Caco-2 (cell line): ENCODE measurements at regions of chr2 and their contacts with region 1.

Region 1: GRCh38 chr2:120398996-120399888 is 53.3 kb downstream of the INHBB start:
- DNase-seq: peak; percentile 96 to 98
- H3K4me3 ChIP-seq: no peak overlapping the region
- H3K4me3 Mint-ChIP-seq: peak overlapping the region; percentile 4
- H3K27ac Mint-ChIP-seq: peak overlapping the region; percentile 96
- H3K4me1 ChIP-seq: peaks cover 88% of the 10 kb centered on the region
- H3K4me1 Mint-ChIP-seq: peaks cover 58% of the 10 kb centered on the region
- H3K27me3 ChIP-seq: no peaks in the 10 kb centered on the region
- H3K27me3 Mint-ChIP-seq: no peaks in the 10 kb centered on the region
- CTCF ChIP-seq: peak in 1 of 2 experiments; percentile 31

Region 2: GRCh38 chr2:120384486-120385354 is 14.5 kb before region 1 on chr2:
- CTCF ChIA-PET with region 1: no interaction called
- POLR2A ChIA-PET with region 1: no interaction called
- intact Hi-C with region 1: loop called (anchors 1 kb)
- DNase-seq: peak; percentile 51 to 71
- H3K4me3 ChIP-seq: no peak overlapping the region
- H3K4me3 Mint-ChIP-seq: no peak overlapping the region
- H3K27ac Mint-ChIP-seq: no peak overlapping the region
- H3K4me1 ChIP-seq: peaks cover 22% of the 10 kb centered on the region
- H3K4me1 Mint-ChIP-seq: no peaks in the 10 kb centered on the region
- H3K27me3 ChIP-seq: no peaks in the 10 kb centered on the region
- H3K27me3 Mint-ChIP-seq: no peaks in the 10 kb centered on the region
- CTCF ChIP-seq: no peak

Region 3: GRCh38 chr2:120429586-120430500 is 30.6 kb after region 1 on chr2:
- CTCF ChIA-PET with region 1: no interaction called
- POLR2A ChIA-PET with region 1: no interaction called
- intact Hi-C with region 1: loop called (anchors 1 kb)
- DNase-seq: no peak
- H3K4me3 ChIP-seq: no peak overlapping the region
- H3K4me3 Mint-ChIP-seq: no peak overlapping the region
- H3K27ac Mint-ChIP-seq: peak overlapping the region; percentile 43
- H3K4me1 ChIP-seq: peaks cover 14% of the 10 kb centered on the region
- H3K4me1 Mint-ChIP-seq: peaks cover 9% of the 10 kb centered on the region
- H3K27me3 ChIP-seq: no peaks in the 10 kb centered on the region
- H3K27me3 Mint-ChIP-seq: no peaks in the 10 kb centered on the region
- CTCF ChIP-seq: peak in 1 of 2 experiments; percentile 5

Region 4: DNA sequence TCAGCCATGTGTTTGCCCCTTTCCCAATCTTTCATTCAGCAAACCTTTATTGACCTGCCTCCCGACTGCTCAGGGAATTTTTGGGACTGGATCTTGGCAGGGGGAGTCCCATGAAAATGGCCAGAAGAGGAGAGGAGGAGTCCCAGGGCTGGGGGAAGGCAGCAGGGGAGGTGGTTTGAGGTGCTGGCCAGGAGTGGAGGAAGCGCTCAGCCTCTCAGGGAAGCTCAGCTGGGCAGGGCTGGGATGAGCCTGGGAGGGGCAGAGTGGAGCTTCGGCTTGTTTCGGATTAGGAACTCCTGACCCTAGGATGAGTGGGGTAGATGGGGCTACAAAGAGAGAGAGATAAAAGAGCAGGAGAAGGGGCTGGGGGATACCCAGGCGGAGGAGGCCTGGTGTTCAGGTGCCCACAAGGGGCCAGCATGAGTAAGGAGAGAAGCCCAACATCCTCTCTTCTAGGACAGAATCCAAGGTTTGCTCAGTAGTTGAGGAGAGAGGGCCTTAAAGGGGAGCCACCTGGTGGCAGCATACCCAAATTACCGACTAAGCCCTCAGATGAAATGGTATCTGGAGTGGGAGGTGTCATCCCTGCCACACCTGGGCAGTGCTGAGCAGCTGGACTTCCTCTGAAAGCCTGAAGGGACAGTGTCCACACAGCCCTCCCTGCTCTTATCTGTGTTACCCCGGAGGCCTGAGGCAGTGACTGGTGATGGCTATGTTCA is 37.8 kb after region 1 on chr2:
- CTCF ChIA-PET with region 1: interaction called, 4 read pairs
- POLR2A ChIA-PET with region 1: interaction called, 3 read pairs
- intact Hi-C with region 1: loop called (anchors 1 kb)
- DNase-seq: peak; percentile 88 to 89
- H3K4me3 ChIP-seq: no peak overlapping the region
- H3K4me3 Mint-ChIP-seq: no peak overlapping the region
- H3K27ac Mint-ChIP-seq: peak overlapping the region; percentile 33
- H3K4me1 ChIP-seq: peaks cover 16% of the 10 kb centered on the region
- H3K4me1 Mint-ChIP-seq: peaks cover 33% of the 10 kb centered on the region
- H3K27me3 ChIP-seq: no peaks in the 10 kb centered on the region
- H3K27me3 Mint-ChIP-seq: no peaks in the 10 kb centered on the region
- CTCF ChIP-seq: peak; percentile 82 to 89